Kidney (tissue), 22 donors: ENCODE measurements at regions of chr6 and their contacts with region 1.

Region 1: DNA sequence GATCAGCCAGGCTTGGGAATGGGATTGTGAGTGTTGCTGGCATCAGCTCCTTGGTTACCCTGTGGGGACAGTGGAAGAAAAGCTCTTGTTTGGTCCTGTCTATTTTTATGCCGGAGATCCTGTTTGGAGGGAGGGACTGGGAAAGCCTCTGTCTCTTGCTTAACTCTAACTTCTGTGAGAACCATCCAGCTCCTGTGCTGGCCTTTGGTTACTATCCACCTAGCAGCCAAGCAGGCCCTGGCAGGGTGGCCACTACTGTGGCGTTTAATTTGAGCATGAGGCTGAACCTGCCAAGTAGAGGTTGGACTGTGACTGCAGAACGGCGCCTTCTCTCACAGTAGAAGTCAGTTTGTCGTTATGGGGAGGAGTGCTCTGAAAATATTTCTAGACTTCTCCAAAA is 193.3 kb downstream of the UTRN start:
- DNase-seq: no peak
- H3K4me3 ChIP-seq: no peak overlapping the region
- H3K27ac ChIP-seq: no peak overlapping the region
- H3K4me1 ChIP-seq: no peaks in the 10 kb centered on the region
- H3K27me3 ChIP-seq: no peaks in the 10 kb centered on the region
- CTCF ChIP-seq: no peak

Region 2: DNA sequence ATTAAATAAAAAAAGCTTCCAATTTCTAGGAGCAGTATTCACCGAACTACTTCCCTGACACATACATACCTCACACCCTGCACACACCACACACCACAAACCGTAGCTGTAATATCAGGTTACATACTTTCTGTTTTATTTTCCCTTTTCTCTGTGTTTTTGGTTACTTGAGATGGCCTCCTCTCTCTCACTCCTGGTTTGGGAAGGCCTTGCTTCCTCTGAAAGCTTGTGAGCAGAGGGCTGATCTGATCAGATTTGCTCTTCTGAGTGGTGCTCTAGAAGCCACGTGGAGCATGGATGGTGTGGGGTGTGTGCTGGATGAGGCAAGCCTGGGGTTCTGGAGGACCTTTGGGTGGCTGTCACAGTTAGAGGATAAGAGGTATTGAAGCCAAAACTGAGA is 172.5 kb before region 1 on chr6:
- intact Hi-C with region 1: loop called (anchors 10 kb)
- DNase-seq: no peak
- H3K4me3 ChIP-seq: no peak overlapping the region
- H3K27ac ChIP-seq: no peak overlapping the region
- H3K4me1 ChIP-seq: no peaks in the 10 kb centered on the region
- H3K27me3 ChIP-seq: no peaks in the 10 kb centered on the region
- CTCF ChIP-seq: no peak